Transverse colon (tissue), 4 donors: ENCODE measurements at regions of chr1 and their contacts with region 1.

Region 1: DNA sequence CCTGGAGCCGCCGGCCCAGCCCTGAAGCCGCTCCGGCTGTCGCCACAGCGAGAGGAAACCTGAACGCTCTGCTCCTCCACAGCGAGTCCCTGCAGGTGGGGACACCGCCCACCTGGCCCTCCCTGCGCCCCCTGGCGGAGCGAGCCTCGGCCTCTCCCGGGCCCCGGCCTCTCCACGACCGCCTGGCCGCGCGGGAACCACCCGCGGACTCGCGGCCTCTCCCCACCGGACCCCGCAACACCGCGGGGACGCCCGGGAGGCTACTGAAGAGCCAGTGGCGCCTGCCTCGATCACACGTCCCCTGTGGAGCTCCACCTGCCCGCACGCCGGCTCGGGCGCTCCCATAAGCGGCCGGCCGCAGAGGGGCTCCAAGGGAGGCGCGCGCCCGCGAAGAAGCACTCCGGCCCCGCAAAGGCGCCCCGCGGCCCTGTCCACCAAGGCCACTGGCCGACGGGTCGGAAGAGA is 109.6 kb downstream of the KCNN3 start:
- DNase-seq: peak; percentile 79
- H3K4me3 ChIP-seq: peak overlapping the region in 3 of 4 donors; percentile 17 to 52 (median 31)
- H3K27ac ChIP-seq: no peak overlapping the region
- H3K4me1 ChIP-seq: peaks cover 0 to 14% (median 9%) of the 10 kb centered on the region in 4 donors
- H3K27me3 ChIP-seq: peaks cover 64% of the 10 kb centered on the region
- CTCF ChIP-seq: peak; percentile 61 to 84 (median 78)
- EP300 ChIP-seq: no peak
- POLR2A ChIP-seq: no peak

Region 2: DNA sequence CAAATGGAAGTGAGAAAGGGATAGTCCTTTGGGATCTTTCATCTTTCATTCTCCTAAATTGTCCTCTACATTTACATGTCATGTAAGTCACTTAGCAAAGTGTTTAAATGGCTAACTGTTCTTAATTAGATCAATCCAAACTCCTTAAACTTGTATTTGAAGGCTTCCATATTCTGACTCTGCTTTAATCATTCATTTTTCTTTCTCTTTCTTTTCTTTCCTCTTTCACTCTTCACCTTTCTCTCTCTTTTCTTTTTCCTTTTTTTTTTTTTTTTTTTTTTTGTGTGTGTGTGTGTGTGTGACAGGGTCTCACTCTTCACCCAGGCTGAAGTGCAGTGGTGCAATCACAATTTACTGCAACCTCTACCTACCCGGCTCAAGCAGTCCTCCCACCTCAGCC is 698.2 kb before region 1 on chr1:
- in situ Hi-C with region 1: no loop called
- intact Hi-C with region 1: loop called (anchors 10 kb)
- DNase-seq: no peak
- H3K4me3 ChIP-seq: no peak overlapping the region
- H3K27ac ChIP-seq: no peak overlapping the region
- H3K4me1 ChIP-seq: no peaks in the 10 kb centered on the region
- H3K27me3 ChIP-seq: peaks cover 7% of the 10 kb centered on the region
- CTCF ChIP-seq: no peak
- EP300 ChIP-seq: no peak
- POLR2A ChIP-seq: no peak